ENCODE measurements at regions of chr10 and their contacts with region 1.

Region 1: GRCh38 chr10:113960617-113961181 is 83.0 kb upstream of the ADRB1 start:
- DNase-seq: peak; percentile 81
- ATAC-seq: peak; percentile 51
- H3K4me3 Mint-ChIP-seq: peak overlapping the region; percentile 38
- H3K27ac Mint-ChIP-seq: peak overlapping the region; percentile 89
- H3K4me1 Mint-ChIP-seq: peaks cover 50% of the 10 kb centered on the region
- H3K27me3 Mint-ChIP-seq: peaks cover 3% of the 10 kb centered on the region

Region 2: GRCh38 chr10:113982769-113983168 is 22.1 kb after region 1 on chr10:
- CTCF ChIA-PET with region 1: interaction called, 15 read pairs
- DNase-seq: no peak
- ATAC-seq: no peak
- H3K4me3 Mint-ChIP-seq: no peak overlapping the region
- H3K27ac Mint-ChIP-seq: no peak overlapping the region
- H3K4me1 Mint-ChIP-seq: peaks cover 26% of the 10 kb centered on the region
- H3K27me3 Mint-ChIP-seq: peaks cover 29% of the 10 kb centered on the region

Measured in activated CD8-positive, alpha-beta memory T cell treated with anti-CD3 and anti-CD28 coated beads, Interleukin-2, amount 10 ng/mL, durations not matched to agents 7 days and 5 days (primary cell).